ENCODE measurements at regions of chr3 and their contacts with region 1.

Region 1: GRCh38 chr3:13895155-13896105 is 15.6 kb upstream of the WNT7A start:
- DNase-seq: peak; percentile 77
- ATAC-seq: peak; percentile 100
- H3K4me3 ChIP-seq: peak overlapping the region; percentile 32 to 39
- H3K27ac ChIP-seq: no peak overlapping the region
- H3K4me1 ChIP-seq: peaks cover 8 to 24% of the 10 kb centered on the region in 2 experiments; a peak in 3 of 4 replicates
- H3K27me3 ChIP-seq: no peaks in the 10 kb centered on the region
- CTCF ChIP-seq: no peak
- POLR2A ChIP-seq: no peak
- RAD21 ChIP-seq: no peak

Region 2: DNA sequence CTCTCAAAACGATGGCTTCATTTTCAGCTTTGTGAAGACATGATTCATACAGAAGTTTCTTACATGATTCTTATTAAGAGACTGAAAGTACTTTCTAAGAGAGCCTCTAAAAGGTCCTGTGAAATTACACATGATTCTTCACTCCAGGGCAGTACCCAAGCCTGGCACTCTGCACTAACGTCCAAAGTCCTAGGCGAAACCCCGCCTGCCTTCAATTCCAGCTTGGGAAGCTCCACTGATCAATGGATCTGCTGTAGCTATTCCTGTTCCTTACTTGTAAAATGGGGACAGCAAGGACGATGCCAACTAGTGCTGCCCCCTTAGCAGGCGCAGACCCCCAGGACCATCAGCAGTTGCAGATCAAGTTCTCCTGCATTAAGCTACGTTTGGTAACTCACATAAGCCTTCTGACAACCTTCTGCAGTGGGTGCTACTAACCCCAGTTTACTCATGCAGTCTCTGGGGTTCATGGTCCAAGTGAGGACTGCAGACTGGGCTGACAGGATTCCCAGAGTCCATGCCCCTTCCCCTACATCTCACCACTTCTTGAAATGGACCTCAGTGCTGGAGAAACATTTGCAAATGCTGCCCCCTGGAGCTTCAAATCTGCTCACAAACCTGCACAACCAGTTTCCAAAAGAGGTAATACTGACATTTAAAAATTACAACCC is 218.7 kb after region 1 on chr3:
- CTCF ChIA-PET with region 1: interaction called, 36 read pairs
- POLR2A ChIA-PET with region 1: no interaction called
- RAD21 ChIA-PET with region 1: interaction called in 1 of 2 experiments, 7 read pairs
- intact Hi-C with region 1: loop called (anchors 1 kb)
- DNase-seq: no peak
- ATAC-seq: 0 out of 2 replicates have a peak, but pooled peaks have one; percentile 36
- H3K4me3 ChIP-seq: no peak overlapping the region
- H3K27ac ChIP-seq: no peak overlapping the region
- H3K4me1 ChIP-seq: no peaks in the 10 kb centered on the region
- H3K27me3 ChIP-seq: no peaks in the 10 kb centered on the region
- CTCF ChIP-seq: peak; percentile 28 to 48 (median 47); a peak in 4 of 6 replicates
- POLR2A ChIP-seq: no peak
- RAD21 ChIP-seq: peak; percentile 65

Region 3: DNA sequence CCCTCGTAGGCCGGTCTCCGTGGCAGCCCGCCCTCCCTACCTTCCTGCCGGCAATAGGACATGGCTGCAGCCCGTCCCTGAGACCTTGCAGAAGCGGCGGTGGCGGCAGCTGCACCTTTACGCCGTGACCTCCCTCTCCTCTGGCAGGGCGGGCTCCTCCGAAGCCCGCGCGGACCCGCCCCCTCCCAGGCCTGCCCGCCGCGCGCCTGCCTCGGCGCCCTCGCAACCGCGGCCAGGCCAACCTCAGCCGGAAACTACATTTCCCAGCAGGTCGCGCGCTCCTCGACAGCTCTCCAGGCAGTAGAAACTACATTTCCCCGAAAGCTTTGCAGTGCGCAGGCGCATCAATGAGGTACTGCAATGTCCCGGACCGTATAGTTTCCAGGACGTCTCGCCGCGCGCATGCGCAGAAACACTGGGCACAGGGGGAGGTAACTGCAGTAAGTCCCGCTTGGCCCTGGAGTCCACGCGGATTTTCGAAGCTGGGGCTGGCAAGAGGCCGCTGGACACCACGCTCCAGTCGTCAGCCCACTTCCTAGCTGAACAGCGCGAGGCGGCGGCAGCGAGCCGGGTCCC is 229.3 kb after region 1 on chr3 and contains the starts of genes CHCHD4 and TMEM43:
- CTCF ChIA-PET with region 1: interaction called, 11 read pairs
- POLR2A ChIA-PET with region 1: interaction called, 6 read pairs
- RAD21 ChIA-PET with region 1: interaction called in 1 of 2 experiments, 7 read pairs
- intact Hi-C with region 1: loop called (anchors 5 kb)
- DNase-seq: peak; percentile 97
- ATAC-seq: peak; percentile 90
- H3K4me3 ChIP-seq: peak within 1 kb of the TSS; percentile 98 to 99
- H3K27ac ChIP-seq: peak within 1 kb of the TSS; percentile 87
- H3K4me1 ChIP-seq: peaks cover 8 to 20% of the 10 kb centered on the region in 2 experiments; a peak in 3 of 4 replicates
- H3K27me3 ChIP-seq: no peaks in the 10 kb centered on the region
- CTCF ChIP-seq: no peak
- POLR2A ChIP-seq: peak; percentile 14
- RAD21 ChIP-seq: no peak
- total RNA-seq, gene CHCHD4: 24.6 TPM
- total RNA-seq, gene TMEM43: 32.4 TPM

Region 4: GRCh38 chr3:14243782-14244181 is 348.4 kb after region 1 on chr3:
- CTCF ChIA-PET with region 1: no interaction called
- POLR2A ChIA-PET with region 1: no interaction called
- RAD21 ChIA-PET with region 1: no interaction called
- intact Hi-C with region 1: no loop called
- DNase-seq: no peak
- ATAC-seq: no peak
- H3K4me3 ChIP-seq: no peak overlapping the region
- H3K27ac ChIP-seq: no peak overlapping the region
- H3K4me1 ChIP-seq: no peaks in the 10 kb centered on the region
- H3K27me3 ChIP-seq: no peaks in the 10 kb centered on the region; the same call in 1 of the 2 replicates
- CTCF ChIP-seq: no peak
- POLR2A ChIP-seq: no peak
- RAD21 ChIP-seq: no peak

Region 5: DNA sequence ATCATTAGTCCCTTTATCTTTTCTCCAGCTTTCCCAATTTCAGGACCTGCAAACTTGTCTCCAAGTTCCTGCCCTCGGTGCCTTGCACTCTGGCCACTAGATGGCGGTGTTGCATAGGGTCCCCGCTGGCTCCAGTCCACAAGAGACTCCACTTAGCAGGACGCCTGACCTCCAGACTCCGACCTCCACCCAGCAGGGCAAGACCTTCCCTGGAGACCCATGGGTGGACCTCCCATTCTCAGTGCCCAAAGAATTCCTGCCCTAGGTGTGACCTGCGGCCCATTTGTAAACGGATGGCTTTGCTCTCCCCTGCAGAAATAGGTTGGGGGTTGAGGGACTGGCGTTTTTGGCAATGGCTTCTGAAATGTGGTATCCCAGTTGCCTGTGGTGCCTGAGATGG is 365.8 kb after region 1 on chr3:
- CTCF ChIA-PET with region 1: interaction called, 8 read pairs
- POLR2A ChIA-PET with region 1: no interaction called
- RAD21 ChIA-PET with region 1: interaction called in 1 of 2 experiments, 3 read pairs
- intact Hi-C with region 1: loop called (anchors 1 kb)
- DNase-seq: peak; percentile 68
- ATAC-seq: peak; percentile 90
- H3K4me3 ChIP-seq: no peak overlapping the region
- H3K27ac ChIP-seq: no peak overlapping the region
- H3K4me1 ChIP-seq: peaks cover 0 to 9% of the 10 kb centered on the region in 2 experiments; a peak in 1 of 4 replicates
- H3K27me3 ChIP-seq: peaks cover 6% of the 10 kb centered on the region; the same call in 1 of the 2 replicates
- CTCF ChIP-seq: peak; percentile 97 to 99 (median 97)
- POLR2A ChIP-seq: no peak
- RAD21 ChIP-seq: peak; percentile 98

Region 6: GRCh38 chr3:14461748-14462324 is 566.4 kb after region 1 on chr3:
- CTCF ChIA-PET with region 1: no interaction called
- POLR2A ChIA-PET with region 1: no interaction called
- RAD21 ChIA-PET with region 1: no interaction called
- intact Hi-C with region 1: loop called (anchors 1 kb)
- DNase-seq: peak; percentile 32
- ATAC-seq: peak; percentile 89
- H3K4me3 ChIP-seq: no peak overlapping the region
- H3K27ac ChIP-seq: no peak overlapping the region
- H3K4me1 ChIP-seq: no peaks in the 10 kb centered on the region
- H3K27me3 ChIP-seq: no peaks in the 10 kb centered on the region
- CTCF ChIP-seq: peak; percentile 69 to 99 (median 81)
- POLR2A ChIP-seq: no peak
- RAD21 ChIP-seq: peak; percentile 96

Region 7: GRCh38 chr3:14467814-14468620 is 572.6 kb after region 1 on chr3:
- CTCF ChIA-PET with region 1: no interaction called
- POLR2A ChIA-PET with region 1: no interaction called
- RAD21 ChIA-PET with region 1: no interaction called
- intact Hi-C with region 1: loop called (anchors 1 kb)
- DNase-seq: no peak
- ATAC-seq: peak; percentile 39
- H3K4me3 ChIP-seq: no peak overlapping the region
- H3K27ac ChIP-seq: no peak overlapping the region
- H3K4me1 ChIP-seq: peaks cover 13 to 19% of the 10 kb centered on the region in 2 experiments
- H3K27me3 ChIP-seq: no peaks in the 10 kb centered on the region
- CTCF ChIP-seq: peak; percentile 63 to 90 (median 89); a peak in 5 of 6 replicates
- POLR2A ChIP-seq: no peak
- RAD21 ChIP-seq: peak; percentile 87